ENCODE measurements at regions of chr4 and their contacts with region 1.

Region 1: GRCh38 chr4:55345980-55346850 is at the start of gene SRD5A3:
- DNase-seq: peak; percentile 87 to 95 (median 95)
- ATAC-seq: peak; percentile 98
- H3K4me3 ChIP-seq: peak within 1 kb of the TSS; percentile 69
- H3K27ac ChIP-seq: peak within 1 kb of the TSS; percentile 93
- H3K4me1 ChIP-seq: peaks cover 2% of the 10 kb centered on the region
- H3K27me3 ChIP-seq: no peaks in the 10 kb centered on the region
- total RNA-seq, gene SRD5A3: 9.5 to 14.9 (median 11.0) TPM

Region 2: DNA sequence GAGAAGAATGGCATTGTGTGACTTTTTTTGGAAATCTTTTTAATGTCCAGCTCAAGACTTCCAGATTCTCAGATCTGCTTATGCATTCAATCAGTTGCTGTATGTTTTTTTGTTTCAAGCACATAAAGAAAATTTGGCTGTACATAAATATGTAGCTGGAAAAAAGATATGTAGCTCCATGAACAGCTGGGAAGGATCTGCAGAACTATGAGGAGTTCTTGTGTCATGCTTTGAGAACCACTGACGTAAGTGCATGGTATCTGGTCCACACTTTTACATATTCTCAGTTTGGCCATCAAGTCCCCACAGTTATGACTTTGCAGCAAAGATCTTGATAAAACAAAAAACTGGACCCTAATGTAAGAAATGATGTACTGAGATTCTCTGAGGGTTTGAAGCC is 522.6 kb before region 1 on chr4:
- intact Hi-C with region 1: no loop called
- DNase-seq: no peak
- ATAC-seq: no peak
- H3K4me3 ChIP-seq: no peak overlapping the region
- H3K27ac ChIP-seq: no peak overlapping the region
- H3K4me1 ChIP-seq: no peaks in the 10 kb centered on the region
- H3K27me3 ChIP-seq: no peaks in the 10 kb centered on the region

Region 3: DNA sequence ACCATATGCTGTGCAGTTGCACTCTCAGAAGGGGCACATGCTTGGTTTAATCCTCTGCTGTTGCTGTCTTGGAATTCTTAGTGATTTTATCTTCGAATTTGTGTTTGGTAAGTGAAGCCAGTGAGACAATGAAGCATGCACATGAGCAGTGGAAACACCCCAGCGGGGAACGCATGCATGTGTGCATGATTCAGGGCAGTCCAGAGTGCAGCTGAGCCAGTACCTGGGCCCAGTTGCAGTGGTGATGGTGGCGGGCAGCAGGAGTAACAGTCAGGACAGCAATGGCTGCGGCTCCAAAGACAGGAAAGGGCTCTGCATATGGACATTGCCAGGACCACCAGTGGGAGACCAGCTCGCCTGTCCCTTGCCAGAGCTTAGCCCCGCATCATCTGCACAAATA is 35.3 kb after region 1 on chr4:
- intact Hi-C with region 1: no loop called
- DNase-seq: no peak
- ATAC-seq: no peak
- H3K4me3 ChIP-seq: no peak overlapping the region
- H3K27ac ChIP-seq: no peak overlapping the region
- H3K4me1 ChIP-seq: no peaks in the 10 kb centered on the region
- H3K27me3 ChIP-seq: no peaks in the 10 kb centered on the region

Region 4: GRCh38 chr4:55395529-55396307 is 49.5 kb after region 1 on chr4 and contains the start of gene TMEM165:
- intact Hi-C with region 1: loop called in 2 of 4 experiments (anchors 5 kb)
- DNase-seq: peak; percentile 92 to 96 (median 96)
- ATAC-seq: peak; percentile 98
- H3K4me3 ChIP-seq: peak within 1 kb of the TSS; percentile 80
- H3K27ac ChIP-seq: peak within 1 kb of the TSS; percentile 96
- H3K4me1 ChIP-seq: peaks cover 3% of the 10 kb centered on the region
- H3K27me3 ChIP-seq: no peaks in the 10 kb centered on the region
- total RNA-seq, gene TMEM165: 45.3 to 89.9 (median 53.1) TPM

Region 5: GRCh38 chr4:55500072-55500471 is 153.9 kb after region 1 on chr4:
- intact Hi-C with region 1: no loop called
- DNase-seq: no peak
- ATAC-seq: no peak
- H3K4me3 ChIP-seq: no peak overlapping the region
- H3K27ac ChIP-seq: no peak overlapping the region
- H3K4me1 ChIP-seq: peaks cover 1% of the 10 kb centered on the region
- H3K27me3 ChIP-seq: no peaks in the 10 kb centered on the region

Region 6: DNA sequence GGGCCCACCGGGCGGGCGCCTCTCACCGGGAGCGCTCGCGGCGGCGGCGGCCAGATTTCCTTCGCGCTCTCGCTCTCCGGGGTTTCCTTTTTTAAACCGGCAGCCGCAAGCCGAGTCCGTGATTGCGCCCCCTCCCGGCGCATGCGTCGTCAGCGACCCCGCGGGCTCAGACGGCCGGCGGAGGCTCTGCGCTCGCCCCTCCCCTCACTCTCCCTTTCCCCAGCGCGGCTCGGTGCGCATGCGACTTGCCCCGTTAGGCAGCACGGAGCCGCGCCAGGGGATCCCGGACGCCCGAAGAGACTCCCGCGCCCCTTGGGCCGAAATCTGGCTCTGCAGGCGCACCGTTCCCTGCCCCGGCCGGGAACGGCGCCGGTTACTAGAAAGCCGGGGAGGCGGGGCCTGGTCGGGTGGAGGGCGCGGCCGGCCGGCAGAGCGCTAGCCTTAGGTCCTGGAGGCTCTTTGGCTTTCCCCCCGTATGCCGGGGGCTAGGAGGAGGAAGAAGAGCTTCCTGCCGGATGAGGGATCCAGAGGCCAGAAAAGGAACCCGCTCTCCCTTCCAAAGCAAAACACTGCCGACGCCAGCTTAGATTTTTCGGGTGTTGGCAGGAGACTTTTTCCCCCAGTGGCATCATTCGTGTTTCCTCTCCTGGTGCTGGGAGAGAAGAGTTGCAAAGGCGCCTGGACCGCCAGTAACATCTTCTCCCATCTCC is 200.7 kb after region 1 on chr4 and contains the start of gene CLOCK:
- intact Hi-C with region 1: loop called in 2 of 4 experiments (anchors 5 kb)
- DNase-seq: peak; percentile 92 to 96 (median 96)
- ATAC-seq: peak; percentile 94 to 95
- H3K4me3 ChIP-seq: peak within 1 kb of the TSS; percentile 95
- H3K27ac ChIP-seq: peak within 1 kb of the TSS; percentile 75
- H3K4me1 ChIP-seq: no peaks in the 10 kb centered on the region
- H3K27me3 ChIP-seq: no peaks in the 10 kb centered on the region
- total RNA-seq, gene CLOCK: 29.6 to 44.8 (median 35.7) TPM

Region 7: GRCh38 chr4:55554453-55555030 is 208.3 kb after region 1 on chr4:
- intact Hi-C with region 1: loop called in 2 of 4 experiments (anchors 5 kb)
- DNase-seq: no peak
- ATAC-seq: no peak
- H3K4me3 ChIP-seq: no peak overlapping the region
- H3K27ac ChIP-seq: no peak overlapping the region
- H3K4me1 ChIP-seq: no peaks in the 10 kb centered on the region
- H3K27me3 ChIP-seq: no peaks in the 10 kb centered on the region

Region 8: GRCh38 chr4:55768291-55768690 is 422.1 kb after region 1 on chr4:
- intact Hi-C with region 1: no loop called
- DNase-seq: no peak
- ATAC-seq: no peak
- H3K4me3 ChIP-seq: no peak overlapping the region
- H3K27ac ChIP-seq: no peak overlapping the region
- H3K4me1 ChIP-seq: no peaks in the 10 kb centered on the region
- H3K27me3 ChIP-seq: no peaks in the 10 kb centered on the region

Region 9: DNA sequence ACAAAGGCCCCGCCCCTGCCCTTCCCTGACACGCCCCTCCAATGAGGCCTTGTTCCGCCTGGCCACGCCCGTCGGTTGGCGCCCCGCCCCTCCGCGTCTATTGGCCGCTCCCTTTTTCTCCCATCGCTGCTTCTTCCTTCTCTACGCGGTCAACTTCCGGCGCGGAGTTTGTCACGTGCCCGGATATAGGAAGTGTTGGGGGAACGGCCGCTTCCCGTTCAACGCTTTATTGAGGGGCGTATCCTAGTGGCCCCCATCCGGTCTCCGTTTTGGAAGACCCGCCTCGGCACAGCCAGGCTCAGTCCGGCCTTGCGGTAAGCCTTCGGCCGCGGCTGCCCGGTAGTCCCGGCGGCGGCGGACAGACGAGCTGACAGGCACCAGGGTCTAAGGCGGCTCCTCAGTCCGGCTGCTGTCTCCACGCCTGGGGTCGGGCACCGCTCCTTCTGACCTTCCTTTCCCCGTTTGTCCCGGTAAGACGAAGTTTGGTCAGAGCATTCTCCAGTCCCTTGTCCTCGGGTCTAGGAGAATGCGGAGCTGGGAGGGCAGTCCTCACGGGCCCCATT is 507.4 kb after region 1 on chr4 and contains the start of gene EXOC1:
- intact Hi-C with region 1: loop called in 1 of 4 experiments (anchors 5 kb)
- DNase-seq: peak; percentile 99 to 100 (median 100)
- ATAC-seq: peak; percentile 99
- H3K4me3 ChIP-seq: peak within 1 kb of the TSS; percentile 83
- H3K27ac ChIP-seq: peak within 1 kb of the TSS; percentile 76
- H3K4me1 ChIP-seq: no peaks in the 10 kb centered on the region
- H3K27me3 ChIP-seq: no peaks in the 10 kb centered on the region
- total RNA-seq, gene EXOC1: 20.9 to 26.2 (median 22.7) TPM

Region 10: GRCh38 chr4:55866973-55867574 is 520.9 kb after region 1 on chr4:
- intact Hi-C with region 1: loop called in 1 of 4 experiments (anchors 5 kb)
- DNase-seq: no peak
- ATAC-seq: peak; percentile 89 to 94
- H3K4me3 ChIP-seq: no peak overlapping the region
- H3K27ac ChIP-seq: no peak overlapping the region
- H3K4me1 ChIP-seq: no peaks in the 10 kb centered on the region
- H3K27me3 ChIP-seq: no peaks in the 10 kb centered on the region

Measured in right cardiac atrium (tissue), 5 donors.